Mammary epithelial cell (primary cell): ENCODE measurements at regions of chr4 and their contacts with region 1.

Region 1: DNA sequence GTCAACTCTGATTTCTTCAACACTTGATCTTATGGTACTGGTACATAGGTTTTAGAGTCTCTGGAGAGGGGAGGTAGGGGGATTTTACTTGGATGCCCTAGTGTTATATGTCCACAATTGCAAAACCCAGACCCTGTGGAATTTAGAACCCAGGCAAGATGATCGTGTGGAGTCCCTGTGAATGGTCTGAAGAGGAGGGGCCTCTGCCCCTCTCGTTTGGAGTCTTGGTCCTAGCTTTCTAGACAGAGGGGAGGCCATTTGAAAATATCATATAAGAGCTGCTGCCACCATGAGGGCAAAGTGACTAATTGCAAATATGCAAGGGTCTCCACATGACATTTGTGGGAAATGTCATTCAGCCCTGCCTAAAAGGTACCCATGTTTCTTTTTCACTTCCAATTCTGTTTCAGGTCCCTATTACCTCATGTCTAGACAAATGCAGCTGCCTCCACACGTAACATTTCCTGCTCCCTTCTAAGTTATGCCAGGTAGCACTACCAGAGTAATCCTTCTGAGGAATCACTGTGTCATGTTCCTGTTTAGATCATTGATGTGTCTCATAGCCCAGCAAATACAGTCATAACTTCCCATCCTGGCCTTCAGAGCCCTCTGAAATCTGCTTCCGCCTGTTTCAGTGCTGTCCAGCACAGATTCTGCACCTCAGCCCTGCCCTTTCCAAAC is 126.8 kb downstream of the KLHL8 start:
- DNase-seq: peak; percentile 89
- H3K4me3 ChIP-seq: no peak overlapping the region
- H3K27ac ChIP-seq: peak overlapping the region; percentile 97
- H3K4me1 ChIP-seq: peaks cover 24% of the 10 kb centered on the region
- H3K27me3 ChIP-seq: no peaks in the 10 kb centered on the region
- CTCF ChIP-seq: peak; percentile 26 to 58

Region 2: GRCh38 chr4:86921608-86922252 is 171.9 kb before region 1 on chr4:
- CTCF ChIA-PET with region 1: interaction called, 13 read pairs
- dilution Hi-C with region 1: no loop called
- in situ Hi-C with region 1: loop called in 1 of 2 experiments (anchors 10 kb)
- intact Hi-C with region 1: loop called (anchors 1 kb)
- DNase-seq: peak; percentile 68
- H3K4me3 ChIP-seq: no peak overlapping the region
- H3K27ac ChIP-seq: peak overlapping the region; percentile 92
- H3K4me1 ChIP-seq: peaks cover 55% of the 10 kb centered on the region
- H3K27me3 ChIP-seq: no peaks in the 10 kb centered on the region
- CTCF ChIP-seq: no peak

Region 3: DNA sequence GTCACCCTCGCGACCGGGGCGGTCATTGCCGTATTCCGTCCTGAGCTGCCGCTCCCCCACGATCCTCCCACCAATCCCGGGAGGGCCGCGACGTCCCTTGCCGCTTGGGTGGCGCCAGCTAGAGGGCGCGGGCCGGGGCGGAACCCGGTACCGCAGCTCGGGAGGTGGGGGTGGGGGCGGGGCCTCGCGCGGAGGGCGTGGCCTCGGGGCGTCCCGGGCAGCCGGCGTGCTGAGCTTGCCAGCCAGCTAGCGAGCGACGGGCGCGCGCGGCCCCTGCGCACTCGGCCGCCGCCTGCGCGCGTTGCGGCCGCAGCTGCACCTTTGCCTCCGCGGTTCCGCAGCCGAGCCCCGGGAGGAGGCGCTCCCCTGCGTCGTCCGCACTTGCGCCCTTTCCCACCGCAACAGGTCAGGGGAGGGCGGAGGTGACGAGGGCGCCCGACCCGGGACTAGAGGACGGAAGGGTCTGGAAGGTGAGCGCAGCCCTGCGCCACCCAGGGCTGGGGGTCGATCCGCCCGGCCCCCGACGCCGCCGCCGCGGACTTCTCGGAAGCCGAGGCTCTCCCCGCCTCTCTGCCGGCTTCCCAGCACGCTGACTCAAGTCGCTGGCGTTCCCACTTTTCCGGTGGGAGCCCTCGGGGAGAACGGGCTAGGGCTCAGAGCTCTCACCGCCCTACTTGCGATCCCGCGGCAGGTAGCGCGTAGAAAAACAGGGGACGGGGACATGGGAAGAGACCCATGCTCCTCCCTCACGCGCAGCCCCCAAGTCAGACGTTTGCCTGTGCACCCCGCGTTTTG is 158.6 kb before region 1 on chr4 and contains the start of gene AFF1:
- CTCF ChIA-PET with region 1: interaction called, 7 read pairs
- dilution Hi-C with region 1: no loop called
- in situ Hi-C with region 1: loop called in 1 of 2 experiments (anchors 10 kb)
- intact Hi-C with region 1: loop called (anchors 1 kb)
- DNase-seq: peak; percentile 90
- H3K4me3 ChIP-seq: peak within 1 kb of the TSS; percentile 81 to 99 (median 91)
- H3K27ac ChIP-seq: peak within 1 kb of the TSS; percentile 97
- H3K4me1 ChIP-seq: peaks cover 22% of the 10 kb centered on the region
- H3K27me3 ChIP-seq: no peaks in the 10 kb centered on the region
- CTCF ChIP-seq: peak in 1 of 2 donors; percentile 41
- total RNA-seq, gene AFF1: 24.8 to 48.3 TPM

Region 4: DNA sequence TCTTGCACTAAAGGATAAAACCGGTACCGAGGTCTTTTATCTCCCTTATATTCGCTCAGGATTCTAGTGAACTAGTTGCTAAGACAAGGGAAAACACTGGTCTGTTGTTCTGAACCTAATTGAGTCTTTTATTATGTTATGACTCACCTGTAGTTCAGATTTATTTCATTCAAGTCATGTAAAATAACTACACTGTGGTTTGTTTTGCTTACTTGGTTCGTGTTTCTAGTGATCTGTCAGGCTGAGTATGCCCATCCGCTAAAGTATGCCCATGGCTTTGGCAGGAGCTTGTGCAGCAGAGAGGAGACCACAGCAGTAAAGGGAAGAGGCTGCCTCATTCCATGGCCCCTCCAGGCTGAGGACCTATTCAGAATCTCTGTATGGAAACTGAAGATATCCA is 32.6 kb before region 1 on chr4:
- CTCF ChIA-PET with region 1: no interaction called
- dilution Hi-C with region 1: no loop called
- in situ Hi-C with region 1: no loop called
- intact Hi-C with region 1: loop called (anchors 1 kb)
- DNase-seq: peak; percentile 93
- H3K4me3 ChIP-seq: no peak overlapping the region
- H3K27ac ChIP-seq: peak overlapping the region; percentile 89
- H3K4me1 ChIP-seq: peaks cover 27% of the 10 kb centered on the region
- H3K27me3 ChIP-seq: no peaks in the 10 kb centered on the region
- CTCF ChIP-seq: no peak

Region 5: DNA sequence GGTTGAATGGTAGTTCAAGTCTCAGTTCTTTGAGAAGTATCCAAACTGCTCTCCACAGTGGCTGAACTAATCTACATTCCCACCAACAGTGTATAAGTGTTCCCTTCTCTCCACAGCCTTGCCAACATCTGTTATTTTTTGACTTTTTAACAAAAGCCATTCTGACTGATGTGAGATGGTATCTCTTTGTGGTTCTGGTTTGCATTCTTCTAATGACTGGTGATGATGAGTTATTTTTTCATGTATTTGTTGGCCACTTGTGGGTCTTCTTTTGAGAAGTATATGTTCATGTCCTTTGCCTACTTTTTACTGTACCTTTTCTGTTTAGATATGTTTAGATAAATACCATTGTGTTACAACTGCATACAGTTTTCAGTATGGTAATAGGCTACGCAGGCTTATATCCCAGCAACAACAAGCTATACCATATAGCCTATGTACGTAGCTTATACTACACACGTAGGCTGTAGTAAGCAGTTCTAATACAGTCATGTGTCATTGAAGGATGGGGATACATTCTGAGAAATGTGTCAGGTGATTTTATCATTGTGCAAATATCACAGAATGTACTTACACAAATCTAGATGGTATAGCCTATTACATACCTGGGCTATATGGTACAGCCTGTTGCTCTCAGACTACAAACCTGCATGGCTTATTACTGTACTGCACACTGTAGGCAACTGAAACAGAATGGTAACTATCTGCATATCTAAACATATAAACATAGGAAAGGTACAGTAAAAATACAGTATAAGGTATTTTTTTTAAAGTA is 98.7 kb after region 1 on chr4:
- CTCF ChIA-PET with region 1: no interaction called
- dilution Hi-C with region 1: no loop called
- in situ Hi-C with region 1: no loop called
- intact Hi-C with region 1: no loop called
- DNase-seq: peak; percentile 8
- H3K4me3 ChIP-seq: no peak overlapping the region
- H3K27ac ChIP-seq: no peak overlapping the region
- H3K4me1 ChIP-seq: no peaks in the 10 kb centered on the region
- H3K27me3 ChIP-seq: no peaks in the 10 kb centered on the region
- CTCF ChIP-seq: no peak

Region 6: DNA sequence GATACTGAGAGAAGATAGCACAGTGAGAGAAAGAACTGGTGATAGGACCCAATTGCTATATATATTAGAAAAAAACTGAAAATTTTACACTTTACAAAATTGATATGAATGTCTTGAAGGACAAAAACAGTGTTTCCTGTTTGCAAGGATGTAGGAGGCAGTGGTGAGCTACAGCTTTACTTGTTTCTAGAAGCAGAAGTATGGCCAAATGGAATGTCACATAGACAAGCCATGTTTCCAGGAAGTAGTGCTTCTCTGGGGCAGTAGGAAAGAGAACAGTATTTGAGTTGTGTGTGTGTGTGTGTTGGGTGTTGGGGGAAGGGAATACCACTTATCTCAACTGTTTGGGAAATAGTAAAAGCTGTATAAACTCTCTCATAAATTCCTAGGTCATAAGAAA is 644.9 kb after region 1 on chr4:
- CTCF ChIA-PET with region 1: no interaction called
- dilution Hi-C with region 1: no loop called
- in situ Hi-C with region 1: no loop called
- intact Hi-C with region 1: no loop called
- DNase-seq: no peak
- H3K4me3 ChIP-seq: no peak overlapping the region
- H3K27ac ChIP-seq: no peak overlapping the region
- H3K4me1 ChIP-seq: peaks cover 4% of the 10 kb centered on the region
- H3K27me3 ChIP-seq: no peaks in the 10 kb centered on the region
- CTCF ChIP-seq: no peak

Region 7: DNA sequence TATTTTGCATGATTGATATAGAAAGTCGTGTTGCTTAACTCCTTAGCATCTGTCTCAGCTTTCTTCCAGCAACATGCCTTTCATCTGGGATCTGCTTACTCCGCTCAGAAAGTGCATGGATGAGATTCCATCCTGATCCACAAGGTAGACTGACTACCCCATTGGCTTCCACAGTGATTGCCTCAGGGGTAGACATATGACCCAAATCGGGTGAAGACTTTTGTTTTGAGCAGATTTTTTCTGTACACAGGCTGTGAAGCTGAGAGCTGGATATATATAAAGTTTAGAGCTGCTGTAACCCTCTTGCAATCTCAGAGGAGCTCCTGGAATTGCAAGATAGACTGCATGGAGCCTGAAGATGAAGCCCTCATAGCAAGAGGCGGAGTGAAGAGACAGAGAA is 1276.4 kb after region 1 on chr4:
- CTCF ChIA-PET with region 1: no interaction called
- dilution Hi-C with region 1: no loop called
- in situ Hi-C with region 1: no loop called
- intact Hi-C with region 1: no loop called
- DNase-seq: no peak
- H3K4me3 ChIP-seq: no peak overlapping the region
- H3K27ac ChIP-seq: no peak overlapping the region
- H3K4me1 ChIP-seq: no peaks in the 10 kb centered on the region
- H3K27me3 ChIP-seq: no peaks in the 10 kb centered on the region
- CTCF ChIP-seq: no peak